Gastrocnemius medialis (tissue), 4 donors: ENCODE measurements at regions of chr5 and their contacts with region 1.

Region 1: GRCh38 chr5:126776497-126777256 is at the start of gene LMNB1:
- DNase-seq: peak; percentile 87 to 88
- ATAC-seq: peak; percentile 90 to 91
- H3K4me3 ChIP-seq: peak within 1 kb of the TSS; percentile 71 to 89 (median 79)
- H3K27ac ChIP-seq: peak within 1 kb of the TSS; percentile 80 to 94 (median 88)
- H3K4me1 ChIP-seq: peaks cover 6 to 22% of the 10 kb centered on the region in 2 donors
- H3K27me3 ChIP-seq: no peaks in the 10 kb centered on the region
- CTCF ChIP-seq: peak in 1 of 5 experiments; percentile 21
- POLR2A ChIP-seq: peak; percentile 35 to 64
- total RNA-seq, gene LMNB1: 0.51 to 4.1 (median 2.4) TPM in 3 of 4 donors, not detected in the other

Region 2: DNA sequence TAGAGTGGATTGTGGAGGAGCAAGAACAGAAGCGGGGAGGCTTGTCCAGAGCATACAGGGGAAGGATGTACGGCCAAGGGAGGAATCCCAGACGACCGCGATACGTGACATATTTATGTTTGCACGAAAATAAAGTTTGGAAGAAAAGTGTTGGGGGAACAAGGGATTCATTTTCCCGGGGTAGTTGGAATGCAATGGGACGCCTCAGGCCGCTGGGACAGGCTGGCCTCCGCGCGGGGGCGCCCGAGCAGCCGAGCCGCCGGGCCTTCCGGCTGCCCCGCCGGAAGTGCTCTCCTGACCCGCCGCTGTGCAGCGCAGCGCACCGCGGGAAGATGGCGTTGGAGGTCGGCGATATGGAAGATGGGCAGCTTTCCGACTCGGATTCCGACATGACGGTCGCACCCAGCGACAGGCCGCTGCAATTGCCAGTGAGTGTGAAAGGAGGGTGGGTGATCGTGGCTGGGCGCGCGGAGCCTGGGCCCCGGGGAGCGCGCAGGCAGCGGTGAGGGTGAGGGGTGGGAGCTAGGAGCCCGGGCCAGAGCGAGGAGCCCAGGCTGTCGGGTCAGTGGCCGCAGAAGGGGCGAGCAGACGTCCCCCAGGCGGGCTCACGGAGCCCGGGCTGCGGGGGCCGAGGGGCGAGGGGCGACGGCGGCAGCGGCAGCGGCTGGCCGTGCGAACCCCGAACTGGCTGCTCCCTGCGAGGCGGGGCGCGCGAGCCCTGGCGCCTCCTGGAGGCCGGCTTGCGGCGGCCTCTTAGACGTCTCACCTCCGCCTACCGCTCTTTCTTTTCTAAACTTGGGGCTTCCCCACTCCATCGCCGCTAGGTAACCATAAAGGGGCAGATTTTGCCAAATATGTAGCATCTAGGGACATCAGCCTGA is 175.8 kb before region 1 on chr5 and contains the start of gene PHAX:
- in situ Hi-C with region 1: no loop called
- intact Hi-C with region 1: loop called (anchors 5 kb)
- DNase-seq: peak; percentile 35 to 61
- ATAC-seq: peak; percentile 95 to 97
- H3K4me3 ChIP-seq: peak within 1 kb of the TSS; percentile 83 to 97 (median 91)
- H3K27ac ChIP-seq: peak within 1 kb of the TSS; percentile 77 to 89 (median 81)
- H3K4me1 ChIP-seq: peaks cover 23 to 28% of the 10 kb centered on the region in 2 donors
- H3K27me3 ChIP-seq: no peaks in the 10 kb centered on the region
- CTCF ChIP-seq: peak in 4 of 5 experiments; percentile 36 to 60 (median 48)
- POLR2A ChIP-seq: peak; percentile 25 to 34
- total RNA-seq, gene PHAX: 33.3 to 50.6 (median 38.4) TPM

Region 3: GRCh38 chr5:126656396-126657007 is 120.2 kb before region 1 on chr5:
- in situ Hi-C with region 1: no loop called
- intact Hi-C with region 1: loop called (anchors 5 kb)
- DNase-seq: no peak
- ATAC-seq: no peak
- H3K4me3 ChIP-seq: no peak overlapping the region
- H3K27ac ChIP-seq: no peak overlapping the region
- H3K4me1 ChIP-seq: no peaks in the 10 kb centered on the region
- H3K27me3 ChIP-seq: no peaks in the 10 kb centered on the region
- CTCF ChIP-seq: peak in 3 of 5 experiments; percentile 49 to 68 (median 54)
- POLR2A ChIP-seq: no peak

Region 4: GRCh38 chr5:126676195-126676624 is 100.5 kb before region 1 on chr5:
- in situ Hi-C with region 1: loop called (anchors 5 to 10 kb)
- intact Hi-C with region 1: loop called (anchors 1 kb)
- DNase-seq: peak; percentile 22 to 27
- ATAC-seq: peak; percentile 72 to 91
- H3K4me3 ChIP-seq: no peak overlapping the region
- H3K27ac ChIP-seq: no peak overlapping the region
- H3K4me1 ChIP-seq: no peaks in the 10 kb centered on the region
- H3K27me3 ChIP-seq: no peaks in the 10 kb centered on the region
- CTCF ChIP-seq: peak; percentile 63 to 83 (median 77)
- POLR2A ChIP-seq: no peak

Region 5: DNA sequence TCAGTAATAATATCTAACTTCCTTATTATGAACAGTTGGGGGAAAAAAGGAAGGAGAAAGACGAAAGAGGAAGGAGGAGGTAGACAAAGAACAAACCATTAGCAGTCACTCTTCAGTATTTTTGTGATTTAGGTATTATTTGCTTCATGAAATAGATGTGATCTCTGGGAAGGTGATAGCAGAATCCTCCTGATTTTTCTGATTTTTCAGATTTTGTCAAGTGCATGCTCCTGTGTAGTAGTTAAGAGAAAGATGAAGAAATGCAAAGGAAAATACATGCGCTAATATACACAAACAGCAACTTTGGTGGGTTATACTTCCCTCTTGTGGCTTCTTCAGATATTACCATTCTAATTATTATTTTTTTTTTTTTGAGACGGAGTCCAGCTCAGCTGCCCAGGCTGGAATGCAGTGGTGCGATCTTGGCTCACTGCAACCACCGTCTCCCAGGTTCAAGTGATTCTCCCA is 31.9 kb after region 1 on chr5:
- in situ Hi-C with region 1: no loop called
- intact Hi-C with region 1: no loop called
- DNase-seq: no peak
- ATAC-seq: no peak
- H3K4me3 ChIP-seq: no peak overlapping the region
- H3K27ac ChIP-seq: no peak overlapping the region
- H3K4me1 ChIP-seq: no peaks in the 10 kb centered on the region
- H3K27me3 ChIP-seq: no peaks in the 10 kb centered on the region
- CTCF ChIP-seq: peak in 2 of 5 experiments; percentile 12 to 38
- POLR2A ChIP-seq: no peak

Region 6: DNA sequence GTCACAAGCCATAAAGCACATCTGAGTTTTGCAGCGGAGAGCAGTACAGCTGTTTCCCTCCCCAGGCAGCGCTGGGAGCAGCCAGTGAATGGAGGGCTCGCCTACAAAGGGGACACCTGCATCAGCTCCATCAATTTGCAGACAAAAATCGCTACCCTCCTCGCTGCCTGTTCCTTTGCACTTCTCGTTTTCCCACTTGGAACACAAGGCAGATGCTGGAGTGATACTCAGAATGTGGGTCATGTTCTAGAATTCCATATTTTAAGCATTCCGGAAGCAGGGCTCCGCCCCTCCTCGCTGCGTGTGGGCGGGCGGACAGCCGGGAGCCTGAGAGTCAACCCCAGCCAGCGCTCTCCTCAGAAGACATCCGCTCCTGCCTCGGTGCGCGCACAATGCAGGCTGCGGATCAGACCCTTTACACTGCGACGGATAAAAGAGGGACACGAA is 92.4 kb after region 1 on chr5:
- in situ Hi-C with region 1: no loop called
- intact Hi-C with region 1: loop called (anchors 5 kb)
- DNase-seq: no peak
- ATAC-seq: no peak
- H3K4me3 ChIP-seq: peak overlapping the region in 1 of 4 donors; percentile 21
- H3K27ac ChIP-seq: no peak overlapping the region
- H3K4me1 ChIP-seq: peaks cover 4 to 8% of the 10 kb centered on the region in 2 donors
- H3K27me3 ChIP-seq: no peaks in the 10 kb centered on the region
- CTCF ChIP-seq: no peak
- POLR2A ChIP-seq: no peak

Region 7: GRCh38 chr5:127030259-127031146 is 253.8 kb after region 1 on chr5 and contains the start of gene MARCHF3:
- in situ Hi-C with region 1: no loop called
- intact Hi-C with region 1: loop called (anchors 5 kb)
- DNase-seq: peak; percentile 90 to 93
- ATAC-seq: peak; percentile 92 to 96
- H3K4me3 ChIP-seq: peak within 1 kb of the TSS; percentile 80 to 95 (median 94)
- H3K27ac ChIP-seq: peak within 1 kb of the TSS; percentile 89 to 95 (median 92)
- H3K4me1 ChIP-seq: peaks cover 8 to 31% of the 10 kb centered on the region in 2 donors
- H3K27me3 ChIP-seq: no peaks in the 10 kb centered on the region
- CTCF ChIP-seq: peak in 2 of 5 experiments; percentile 22 to 26
- POLR2A ChIP-seq: peak; percentile 90 to 97
- total RNA-seq, gene MARCHF3: 2.4 to 6.2 (median 3.6) TPM

Region 8: DNA sequence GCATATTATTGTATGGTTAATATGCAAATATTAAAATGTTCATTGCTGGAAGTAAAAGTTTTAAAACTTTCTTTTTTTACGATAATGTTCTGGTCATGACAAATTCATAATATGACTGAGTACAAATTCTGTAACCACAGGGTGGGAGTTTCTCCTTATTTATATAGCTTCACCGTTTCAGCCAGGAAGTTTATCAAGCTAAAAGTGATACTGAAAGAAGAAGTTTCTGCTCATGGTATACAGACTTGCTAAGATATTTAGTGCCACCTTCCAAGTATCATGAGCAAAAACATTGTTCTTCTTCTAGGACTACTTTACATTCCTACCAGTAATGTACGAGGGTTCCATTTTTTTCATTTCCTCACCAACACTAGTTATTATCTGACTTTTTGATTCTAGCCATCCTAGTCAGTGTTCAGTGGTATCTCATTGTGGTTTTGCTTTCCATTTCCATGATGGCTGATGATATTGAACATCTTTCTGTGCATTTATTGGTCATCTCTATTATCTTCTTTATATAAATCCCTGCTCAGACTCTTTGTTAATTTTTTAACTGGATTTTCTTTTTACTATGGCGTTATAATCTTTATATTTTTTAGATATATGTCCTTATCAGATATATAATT is 646.6 kb after region 1 on chr5:
- in situ Hi-C with region 1: no loop called
- intact Hi-C with region 1: no loop called
- DNase-seq: no peak
- ATAC-seq: no peak
- H3K4me3 ChIP-seq: no peak overlapping the region
- H3K27ac ChIP-seq: no peak overlapping the region
- H3K4me1 ChIP-seq: peaks cover 7 to 12% of the 10 kb centered on the region in 2 donors
- H3K27me3 ChIP-seq: no peaks in the 10 kb centered on the region
- CTCF ChIP-seq: no peak
- POLR2A ChIP-seq: no peak